Panc1 (cell line): ENCODE measurements at regions of chr6 and their contacts with region 1.

Region 1: DNA sequence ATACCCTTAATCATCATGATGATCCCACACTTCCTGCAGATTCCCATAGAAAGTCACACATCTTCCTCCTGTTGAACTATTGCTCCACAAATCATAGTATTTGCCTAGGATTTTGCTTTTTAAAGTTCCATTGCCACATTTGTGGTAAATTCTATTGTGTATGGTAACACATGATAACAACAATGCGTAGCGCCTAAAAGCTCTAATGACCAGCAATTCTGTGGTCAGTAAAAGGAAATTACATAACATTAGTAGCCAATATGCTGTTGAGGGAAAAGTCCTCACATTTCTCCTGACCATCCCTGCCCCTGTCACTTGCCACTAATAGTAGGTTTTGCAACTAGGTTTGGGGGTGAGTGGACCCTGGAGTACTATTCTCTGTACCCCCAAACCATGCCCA is 31.8 kb upstream of the PDE7B start:
- DNase-seq: no peak
- ATAC-seq: no peak
- H3K4me3 ChIP-seq: no peak overlapping the region
- H3K27ac ChIP-seq: no peak overlapping the region
- H3K4me1 ChIP-seq: no peaks in the 10 kb centered on the region
- H3K27me3 ChIP-seq: no peaks in the 10 kb centered on the region
- CTCF ChIP-seq: no peak

Region 2: DNA sequence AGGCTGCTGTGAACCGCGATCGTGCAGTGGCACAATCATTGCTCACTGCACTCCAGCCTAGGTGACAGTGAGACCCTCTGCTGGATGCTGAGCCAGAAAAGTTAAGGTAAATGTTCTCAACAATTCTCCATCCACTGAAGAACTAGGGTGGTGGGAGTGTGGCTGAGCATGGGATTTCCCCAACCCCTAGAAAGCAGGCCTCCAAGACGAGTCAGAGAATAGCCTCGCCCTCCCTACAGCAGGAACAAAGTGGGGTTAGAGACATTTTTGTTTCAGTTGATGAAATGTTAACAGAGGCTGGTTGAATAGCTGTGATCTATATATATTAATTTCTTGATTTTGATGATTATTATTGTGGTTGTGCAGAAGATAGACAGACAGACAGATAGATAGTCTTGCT is 863.6 kb before region 1 on chr6:
- CTCF ChIA-PET with region 1: no interaction called
- POLR2A ChIA-PET with region 1: interaction called, 10 read pairs
- in situ Hi-C with region 1: no loop called
- intact Hi-C with region 1: no loop called
- DNase-seq: no peak
- ATAC-seq: no peak
- H3K4me3 ChIP-seq: no peak overlapping the region
- H3K27ac ChIP-seq: no peak overlapping the region
- H3K4me1 ChIP-seq: no peaks in the 10 kb centered on the region
- H3K27me3 ChIP-seq: no peaks in the 10 kb centered on the region
- CTCF ChIP-seq: no peak

Region 3: GRCh38 chr6:135423649-135424128 is 396.0 kb before region 1 on chr6:
- CTCF ChIA-PET with region 1: no interaction called
- POLR2A ChIA-PET with region 1: no interaction called
- in situ Hi-C with region 1: no loop called
- intact Hi-C with region 1: no loop called
- DNase-seq: no peak
- ATAC-seq: peak; percentile 78
- H3K4me3 ChIP-seq: no peak overlapping the region
- H3K27ac ChIP-seq: no peak overlapping the region
- H3K4me1 ChIP-seq: no peaks in the 10 kb centered on the region
- H3K27me3 ChIP-seq: no peaks in the 10 kb centered on the region
- CTCF ChIP-seq: peak; percentile 76; the same call in 1 of the 2 replicates